ENCODE measurements at regions of chr2 and their contacts with region 1.

Region 1: GRCh38 chr2:196080526-196080925 is 11.9 kb upstream of the DNAH7 start:
- DNase-seq: no peak
- H3K4me3 ChIP-seq: no peak overlapping the region
- H3K27ac ChIP-seq: no peak overlapping the region
- H3K4me1 ChIP-seq: no peaks in the 10 kb centered on the region
- H3K27me3 ChIP-seq: no peaks in the 10 kb centered on the region
- CTCF ChIP-seq: no peak
- POLR2A ChIP-seq: no peak

Region 2: DNA sequence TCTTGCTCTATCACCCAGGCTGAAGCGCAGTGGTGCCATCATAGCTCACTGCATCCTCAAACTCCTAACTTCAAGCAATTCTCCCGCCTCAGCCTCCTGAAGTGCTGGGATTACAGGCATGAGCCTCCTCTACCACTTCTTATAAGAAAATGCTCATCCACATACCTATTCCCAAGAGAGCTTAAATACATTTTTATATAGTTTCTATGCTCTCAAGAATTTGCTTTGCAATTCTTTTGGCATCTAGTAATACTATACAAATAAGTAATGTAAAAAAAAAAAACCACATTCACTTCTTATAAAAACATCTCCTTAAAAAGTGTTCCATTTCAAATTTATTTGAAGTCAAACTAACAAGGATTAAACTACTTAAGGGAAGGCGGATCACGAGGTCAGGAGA is 209.2 kb before region 1 on chr2:
- intact Hi-C with region 1: no loop called
- DNase-seq: no peak
- H3K4me3 ChIP-seq: no peak overlapping the region
- H3K27ac ChIP-seq: no peak overlapping the region
- H3K4me1 ChIP-seq: no peaks in the 10 kb centered on the region
- H3K27me3 ChIP-seq: no peaks in the 10 kb centered on the region
- CTCF ChIP-seq: no peak
- POLR2A ChIP-seq: no peak

Region 3: GRCh38 chr2:196274387-196274809 is 193.9 kb after region 1 on chr2:
- intact Hi-C with region 1: loop called (anchors 2 kb)
- DNase-seq: peak; percentile 18
- H3K4me3 ChIP-seq: no peak overlapping the region
- H3K27ac ChIP-seq: no peak overlapping the region
- H3K4me1 ChIP-seq: no peaks in the 10 kb centered on the region
- H3K27me3 ChIP-seq: no peaks in the 10 kb centered on the region
- CTCF ChIP-seq: no peak
- POLR2A ChIP-seq: no peak

Region 4: GRCh38 chr2:196338440-196338839 is 257.9 kb after region 1 on chr2:
- intact Hi-C with region 1: loop called (anchors 2 kb)
- DNase-seq: no peak
- H3K4me3 ChIP-seq: no peak overlapping the region
- H3K27ac ChIP-seq: no peak overlapping the region
- H3K4me1 ChIP-seq: no peaks in the 10 kb centered on the region
- H3K27me3 ChIP-seq: no peaks in the 10 kb centered on the region
- CTCF ChIP-seq: no peak
- POLR2A ChIP-seq: no peak

Measured in prostate gland (tissue), 2 donors.